AG04449 (cell line): ENCODE measurements at regions of chr5 and their contacts with region 1.

Region 1: GRCh38 chr5:54895816-54896341 is 89.5 kb downstream of the ESM1 start:
- DNase-seq: no peak
- H3K4me3 ChIP-seq: no peak overlapping the region
- CTCF ChIP-seq: peak; percentile 49

Region 2: DNA sequence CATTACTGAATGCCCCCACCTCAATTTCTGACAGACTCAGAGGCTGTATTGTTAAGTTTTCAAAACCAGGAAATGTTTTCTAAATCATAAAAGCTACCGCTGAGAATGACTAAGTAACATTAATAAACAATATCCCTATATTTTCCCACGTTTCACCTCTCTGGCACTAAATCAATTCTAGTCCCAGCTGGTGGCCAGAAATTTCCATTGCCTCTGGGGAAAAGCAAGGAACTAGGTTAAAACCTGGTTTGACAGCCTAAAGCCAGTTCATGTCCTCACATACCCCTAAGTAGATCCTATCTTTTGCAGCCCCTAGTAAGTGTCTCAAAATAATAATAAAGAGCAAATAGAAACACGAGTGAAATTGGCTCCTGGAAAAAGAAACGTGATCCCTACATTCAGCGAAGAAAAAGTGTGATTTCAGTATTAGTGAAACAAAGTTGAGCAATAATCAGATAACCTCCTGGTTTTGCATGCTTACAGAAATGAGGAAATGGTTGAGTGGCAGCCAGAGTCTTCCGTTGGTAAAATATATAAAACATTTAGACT is 21.4 kb before region 1 on chr5:
- CTCF ChIA-PET with region 1: interaction called, 12 read pairs
- POLR2A ChIA-PET with region 1: no interaction called
- DNase-seq: no peak
- H3K4me3 ChIP-seq: no peak overlapping the region
- CTCF ChIP-seq: no peak

Region 3: DNA sequence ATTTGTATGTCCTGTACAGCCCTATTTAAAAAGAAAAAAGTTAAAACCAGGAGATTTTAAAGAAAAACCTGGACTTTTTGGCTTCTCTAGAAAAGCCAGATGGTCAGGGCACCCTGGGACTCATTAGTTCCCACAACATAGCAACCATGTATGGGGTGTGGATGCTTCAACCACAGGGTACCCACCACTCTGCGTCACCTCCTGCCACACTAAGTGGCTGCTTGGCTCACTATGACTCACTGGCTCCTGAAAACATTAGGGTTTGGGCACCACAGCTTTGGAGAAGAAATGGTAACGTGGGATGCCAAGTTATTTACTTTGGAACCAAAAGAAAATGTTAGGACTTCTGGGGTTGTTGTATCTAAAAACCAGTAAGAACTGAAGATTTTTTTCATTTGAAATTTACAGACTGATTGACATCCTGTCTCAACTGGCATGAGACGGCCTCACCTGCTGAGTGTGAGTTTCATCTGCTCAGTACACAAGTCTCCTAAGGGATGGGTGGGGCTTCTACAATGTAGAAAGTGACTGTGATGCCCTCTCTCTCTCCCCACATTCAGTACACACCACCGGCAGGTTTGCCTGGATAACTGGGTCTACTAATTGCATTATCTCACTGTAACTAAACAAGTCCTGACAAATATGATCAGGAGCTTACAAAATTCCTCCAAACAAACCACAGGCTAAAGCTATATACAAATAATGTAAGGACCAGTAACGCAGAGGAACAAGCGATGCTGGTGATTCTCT is 14.4 kb before region 1 on chr5:
- CTCF ChIA-PET with region 1: interaction called, 144 read pairs
- POLR2A ChIA-PET with region 1: no interaction called
- DNase-seq: no peak
- H3K4me3 ChIP-seq: no peak overlapping the region
- CTCF ChIP-seq: no peak

Region 4: GRCh38 chr5:55052383-55052931 is 156.6 kb after region 1 on chr5:
- CTCF ChIA-PET with region 1: no interaction called
- POLR2A ChIA-PET with region 1: no interaction called
- DNase-seq: no peak
- H3K4me3 ChIP-seq: no peak overlapping the region
- CTCF ChIP-seq: no peak

Region 5: DNA sequence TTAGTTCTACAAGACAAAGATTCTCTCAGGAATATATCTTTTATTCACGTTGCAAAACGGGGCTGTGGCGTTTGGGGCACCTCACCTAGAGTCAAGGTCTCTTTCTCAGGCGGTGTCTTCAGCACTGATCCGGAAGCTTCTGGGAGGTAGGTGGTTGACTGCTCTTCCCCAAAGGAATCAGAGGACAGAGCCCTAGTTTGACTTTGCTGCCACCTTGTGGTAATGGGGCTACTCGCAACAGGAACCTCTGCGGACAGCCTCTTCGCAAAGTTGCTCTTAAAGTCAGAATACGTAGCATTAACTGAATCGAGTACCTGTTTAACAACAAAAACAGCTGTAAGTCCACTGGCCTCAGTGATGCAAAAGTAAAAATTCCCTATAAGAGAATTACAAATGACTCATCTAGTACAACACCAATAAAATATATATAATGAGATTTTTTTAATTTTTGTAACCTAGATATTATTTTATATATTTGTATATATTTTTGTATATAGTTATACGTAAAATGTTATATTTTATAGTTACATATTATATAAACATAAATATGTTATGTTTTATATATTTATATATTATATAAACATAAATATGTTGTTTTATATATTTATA is 250.8 kb after region 1 on chr5:
- CTCF ChIA-PET with region 1: interaction called, 389 read pairs
- POLR2A ChIA-PET with region 1: no interaction called
- DNase-seq: peak; percentile 17
- H3K4me3 ChIP-seq: no peak overlapping the region
- CTCF ChIP-seq: peak; percentile 95